Activated CD8-positive, alpha-beta T cell treated with anti-CD3 and anti-CD28 coated beads, Interleukin-2, amount 10 ng/mL, durations not matched to agents 7 days and 5 days (primary cell): ENCODE measurements at regions of chr4 and their contacts with region 1.

Region 1: GRCh38 chr4:121252224-121252806 is 88.2 kb upstream of the TNIP3 start:
- DNase-seq: peak; percentile 69
- ATAC-seq: no peak
- H3K4me3 Mint-ChIP-seq: no peak overlapping the region
- H3K27ac Mint-ChIP-seq: no peak overlapping the region
- H3K4me1 Mint-ChIP-seq: peaks cover 55% of the 10 kb centered on the region
- H3K27me3 Mint-ChIP-seq: no peaks in the 10 kb centered on the region

Region 2: DNA sequence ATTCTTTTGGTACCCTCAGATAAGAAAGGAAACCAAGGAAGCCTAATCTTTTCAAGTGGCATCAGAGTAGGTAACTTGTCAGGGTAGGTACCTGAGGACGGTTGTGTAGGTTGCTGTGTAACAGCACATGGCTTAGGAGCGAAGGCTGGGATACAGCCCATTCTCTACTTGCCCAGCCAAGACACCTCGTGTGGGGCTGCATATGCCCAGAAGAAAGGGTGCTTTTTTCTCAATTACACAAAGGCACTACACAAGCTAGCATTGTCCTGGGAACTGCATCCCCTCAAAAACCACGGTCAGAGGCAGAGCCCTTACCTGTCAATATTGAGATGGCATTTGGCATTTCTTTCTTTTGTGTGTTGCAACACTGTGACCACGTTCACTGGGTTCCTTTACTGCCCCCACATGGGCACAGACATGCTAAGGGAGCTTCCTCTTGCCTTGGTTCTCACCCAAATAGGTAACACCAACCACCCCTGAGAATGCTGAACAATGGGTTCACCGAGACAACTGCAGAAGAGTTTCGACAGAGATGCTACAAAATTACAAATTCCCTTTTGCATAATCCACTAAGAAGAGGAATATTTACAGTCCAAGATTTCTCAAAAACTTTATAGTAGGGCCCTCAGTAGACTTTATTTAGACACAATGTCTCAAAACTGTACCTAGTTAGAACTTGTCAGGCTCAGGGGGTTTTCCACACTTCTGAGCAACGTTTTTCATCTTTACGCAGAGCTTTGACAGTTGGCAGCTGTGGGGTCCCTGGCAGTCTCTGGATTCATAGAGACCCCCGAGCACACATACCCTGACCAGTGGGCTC is 52.4 kb before region 1 on chr4:
- CTCF ChIA-PET with region 1: interaction called, 38 read pairs
- POLR2A ChIA-PET with region 1: no interaction called
- DNase-seq: peak; percentile 51
- ATAC-seq: peak; percentile 74
- H3K4me3 Mint-ChIP-seq: peak overlapping the region; percentile 3
- H3K27ac Mint-ChIP-seq: peak overlapping the region; percentile 27
- H3K4me1 Mint-ChIP-seq: peaks cover 24% of the 10 kb centered on the region
- H3K27me3 Mint-ChIP-seq: no peaks in the 10 kb centered on the region

Region 3: DNA sequence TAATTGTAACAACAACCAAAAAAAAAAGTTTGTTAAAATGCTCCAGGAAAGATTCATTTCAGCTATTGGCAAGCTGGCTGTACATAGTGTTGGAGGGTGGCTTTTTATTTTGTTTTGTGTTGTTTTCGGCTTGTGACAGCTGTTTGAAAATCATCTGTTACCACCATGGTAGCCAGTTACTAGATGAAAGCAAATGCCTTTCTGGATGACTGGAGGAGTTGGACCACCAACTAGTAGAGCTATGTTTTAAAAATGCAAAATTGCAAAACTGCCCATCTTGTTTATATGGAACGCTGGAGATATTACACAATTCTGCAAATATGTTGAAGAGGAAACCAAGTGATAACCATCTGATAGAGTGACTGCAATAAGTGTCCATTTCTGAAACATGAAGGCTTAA is 35.0 kb before region 1 on chr4:
- CTCF ChIA-PET with region 1: interaction called, 13 read pairs
- POLR2A ChIA-PET with region 1: interaction called, 3 read pairs
- DNase-seq: no peak
- ATAC-seq: no peak
- H3K4me3 Mint-ChIP-seq: no peak overlapping the region
- H3K27ac Mint-ChIP-seq: no peak overlapping the region
- H3K4me1 Mint-ChIP-seq: peaks cover 28% of the 10 kb centered on the region
- H3K27me3 Mint-ChIP-seq: no peaks in the 10 kb centered on the region

Region 4: GRCh38 chr4:121227341-121227792 is 24.9 kb before region 1 on chr4:
- CTCF ChIA-PET with region 1: interaction called, 16 read pairs
- POLR2A ChIA-PET with region 1: no interaction called
- DNase-seq: no peak
- ATAC-seq: peak; percentile 72
- H3K4me3 Mint-ChIP-seq: peak overlapping the region; percentile 51
- H3K27ac Mint-ChIP-seq: peak overlapping the region; percentile 13
- H3K4me1 Mint-ChIP-seq: peaks cover 13% of the 10 kb centered on the region
- H3K27me3 Mint-ChIP-seq: no peaks in the 10 kb centered on the region

Region 5: GRCh38 chr4:121272526-121272925 is 20.2 kb after region 1 on chr4:
- CTCF ChIA-PET with region 1: interaction called, 13 read pairs
- POLR2A ChIA-PET with region 1: no interaction called
- DNase-seq: no peak
- ATAC-seq: no peak
- H3K4me3 Mint-ChIP-seq: no peak overlapping the region
- H3K27ac Mint-ChIP-seq: no peak overlapping the region
- H3K4me1 Mint-ChIP-seq: peaks cover 7% of the 10 kb centered on the region
- H3K27me3 Mint-ChIP-seq: peaks cover 3% of the 10 kb centered on the region